ENCODE measurements at regions of chr19 and their contacts with region 1.

Region 1: GRCh38 chr19:58326914-58327726 is at the start of gene ZSCAN22:
- DNase-seq: peak; percentile 97
- H3K4me3 ChIP-seq: peak within 1 kb of the TSS; percentile 66 to 67
- H3K27ac ChIP-seq: peak within 1 kb of the TSS; percentile 86 to 89
- H3K4me1 ChIP-seq: no peaks in the 10 kb centered on the region
- H3K27me3 ChIP-seq: no peaks in the 10 kb centered on the region
- CTCF ChIP-seq: peak in 2 of 4 experiments; percentile 14 to 26
- POLR2A ChIP-seq: peak; percentile 29
- total RNA-seq, gene ZSCAN22: 2.7 to 4.1 TPM

Region 2: DNA sequence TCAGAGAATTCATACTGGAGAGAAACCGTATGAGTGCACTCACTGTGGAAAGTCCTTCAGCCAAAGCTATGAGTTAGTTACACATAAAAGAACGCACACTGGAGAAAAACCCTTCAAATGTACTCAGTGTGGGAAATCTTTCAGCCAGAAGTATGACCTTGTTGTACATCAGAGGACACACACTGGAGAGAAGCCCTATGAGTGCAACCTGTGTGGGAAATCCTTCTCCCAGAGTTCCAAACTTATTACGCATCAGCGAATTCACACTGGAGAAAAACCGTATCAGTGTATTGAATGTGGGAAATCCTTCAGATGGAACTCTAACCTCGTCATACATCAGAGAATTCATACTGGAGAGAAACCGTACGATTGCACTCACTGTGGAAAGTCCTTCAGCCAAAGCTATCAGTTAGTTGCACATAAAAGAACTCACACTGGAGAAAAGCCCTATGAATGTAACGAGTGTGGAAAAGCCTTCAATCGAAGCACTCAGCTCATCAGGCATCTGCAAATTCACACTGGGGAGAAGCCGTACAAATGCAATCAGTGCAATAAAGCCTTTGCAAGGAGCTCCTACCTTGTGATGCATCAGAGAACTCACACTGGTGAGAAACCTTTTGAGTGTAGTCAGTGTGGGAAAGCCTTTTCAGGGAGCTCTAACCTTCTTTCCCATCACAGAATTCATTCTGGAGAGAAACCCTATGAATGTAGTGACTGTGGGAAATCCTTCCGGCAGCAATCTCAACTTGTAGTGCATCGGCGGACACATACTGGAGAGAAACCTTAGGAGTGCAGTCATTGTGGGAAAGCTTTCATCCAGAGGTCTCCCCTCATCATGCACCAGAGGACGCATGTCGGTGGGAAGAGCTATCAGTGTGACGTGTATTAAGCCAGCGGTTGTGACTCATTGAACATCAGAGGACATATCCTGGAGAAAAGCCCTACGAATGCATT is 64.9 kb before region 1 on chr19:
- intact Hi-C with region 1: no loop called
- DNase-seq: no peak
- H3K4me3 ChIP-seq: no peak overlapping the region
- H3K27ac ChIP-seq: no peak overlapping the region
- H3K4me1 ChIP-seq: no peaks in the 10 kb centered on the region
- H3K27me3 ChIP-seq: no peaks in the 10 kb centered on the region
- CTCF ChIP-seq: no peak
- POLR2A ChIP-seq: no peak

Region 3: DNA sequence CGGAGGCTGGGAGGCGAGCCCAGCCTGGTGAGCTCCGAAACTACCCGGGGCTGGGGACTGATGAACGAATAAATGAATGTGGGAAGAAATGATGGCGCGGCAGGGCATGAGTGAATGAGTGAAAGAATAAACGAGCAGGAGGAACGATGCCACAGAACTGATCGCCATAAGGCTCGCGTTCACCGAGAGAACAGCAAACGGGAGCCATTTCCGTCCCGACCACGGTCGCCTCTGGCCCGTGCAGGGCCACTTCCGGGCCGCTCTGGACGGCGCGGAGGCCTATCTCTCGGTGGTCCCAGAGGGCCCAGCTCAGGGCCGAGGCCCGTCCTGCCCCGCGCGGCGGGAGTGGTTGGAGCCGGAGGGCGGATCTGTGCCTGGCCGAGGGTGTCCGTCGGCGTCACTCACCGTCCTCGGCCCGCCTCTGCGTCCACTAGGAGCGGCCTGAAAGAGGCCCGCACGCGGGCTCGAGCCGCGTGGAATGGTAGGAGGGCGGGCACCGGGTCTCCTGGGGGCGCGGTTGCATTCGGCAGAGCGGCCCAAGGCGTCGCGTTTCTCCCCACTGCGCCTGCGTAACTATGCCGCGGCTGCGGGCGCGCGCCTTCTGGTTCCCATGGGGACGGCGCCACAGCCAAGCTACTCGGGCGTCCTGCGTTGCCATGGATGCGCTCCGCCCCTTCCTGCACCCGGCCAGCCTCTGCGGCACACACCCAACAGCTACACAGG is 35.3 kb after region 1 on chr19 and contains the start of gene ZNF497:
- intact Hi-C with region 1: loop called (anchors 5 kb)
- DNase-seq: peak; percentile 96
- H3K4me3 ChIP-seq: peak within 1 kb of the TSS; percentile 55 to 57
- H3K27ac ChIP-seq: peak within 1 kb of the TSS; percentile 90
- H3K4me1 ChIP-seq: no peaks in the 10 kb centered on the region
- H3K27me3 ChIP-seq: no peaks in the 10 kb centered on the region
- CTCF ChIP-seq: peak in 3 of 4 experiments; percentile 17 to 35 (median 33)
- POLR2A ChIP-seq: peak; percentile 51
- total RNA-seq, gene ZNF497: 6.6 to 11.0 TPM

Region 4: GRCh38 chr19:58380722-58381466 is 53.8 kb after region 1 on chr19 and contains the start of gene ZNF837:
- intact Hi-C with region 1: loop called (anchors 2 kb)
- DNase-seq: peak; percentile 99
- H3K4me3 ChIP-seq: peak within 1 kb of the TSS; percentile 87
- H3K27ac ChIP-seq: peak within 1 kb of the TSS; percentile 95 to 97
- H3K4me1 ChIP-seq: peaks cover 11% of the 10 kb centered on the region
- H3K27me3 ChIP-seq: no peaks in the 10 kb centered on the region
- CTCF ChIP-seq: peak in 2 of 4 experiments; percentile 38 to 55
- POLR2A ChIP-seq: peak; percentile 73
- total RNA-seq, gene ZNF837: 12.2 to 15.7 TPM

Measured in prostate gland (tissue), 2 donors.